A673 (cell line): ENCODE measurements at regions of chr16 and their contacts with region 1.

Region 1: GRCh38 chr16:62088731-62089410 is 52.6 kb upstream of the CDH8 start:
- DNase-seq: peak; percentile 94
- H3K4me3 ChIP-seq: no peak overlapping the region
- H3K27ac ChIP-seq: peak overlapping the region; percentile 89
- H3K4me1 ChIP-seq: peaks cover 47% of the 10 kb centered on the region
- H3K27me3 ChIP-seq: no peaks in the 10 kb centered on the region
- CTCF ChIP-seq: no peak

Region 2: DNA sequence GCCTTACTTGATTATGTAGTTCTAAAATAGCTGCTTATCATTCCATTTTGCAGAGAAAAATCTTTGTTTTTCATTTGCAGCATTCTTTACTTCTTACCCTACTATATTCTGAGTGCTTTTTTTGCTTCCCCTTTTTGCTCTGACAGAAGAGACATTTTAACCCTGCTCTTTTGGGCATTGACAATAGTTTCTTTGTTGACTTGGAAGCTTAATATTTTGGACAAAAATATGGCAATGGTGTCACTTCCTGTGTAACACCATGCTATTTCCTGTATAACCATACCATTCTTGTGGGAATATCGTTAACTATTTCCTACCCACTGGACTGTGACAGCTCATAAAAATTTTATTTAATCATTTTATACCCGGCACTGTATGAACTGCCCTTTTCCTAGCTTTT is 799.7 kb before region 1 on chr16:
- CTCF ChIA-PET with region 1: no interaction called
- POLR2A ChIA-PET with region 1: no interaction called
- intact Hi-C with region 1: loop called (anchors 2 kb)
- DNase-seq: peak; percentile 90
- H3K4me3 ChIP-seq: no peak overlapping the region
- H3K27ac ChIP-seq: peak overlapping the region; percentile 75
- H3K4me1 ChIP-seq: peaks cover 42% of the 10 kb centered on the region
- H3K27me3 ChIP-seq: no peaks in the 10 kb centered on the region
- CTCF ChIP-seq: no peak

Region 3: DNA sequence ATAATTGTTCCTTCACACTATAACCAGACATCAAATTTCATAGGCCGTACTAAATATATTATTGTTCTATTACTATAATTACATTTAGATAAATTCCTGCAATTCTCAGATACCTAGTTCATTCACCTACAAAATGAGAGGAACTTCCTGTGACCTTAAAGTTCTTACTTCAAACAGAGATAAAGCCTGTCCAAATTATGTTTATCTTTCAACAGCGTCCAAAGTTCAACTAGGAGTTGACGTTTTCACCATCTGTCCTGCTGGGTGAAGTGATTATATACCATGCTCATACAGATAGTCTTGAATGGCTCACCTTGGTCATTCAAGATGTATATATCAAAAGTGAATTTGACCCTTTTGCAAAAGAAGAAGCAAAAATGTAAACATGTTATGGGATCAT is 493.3 kb before region 1 on chr16:
- CTCF ChIA-PET with region 1: no interaction called
- POLR2A ChIA-PET with region 1: interaction called, 32 read pairs
- intact Hi-C with region 1: no loop called
- DNase-seq: no peak
- H3K4me3 ChIP-seq: no peak overlapping the region
- H3K27ac ChIP-seq: no peak overlapping the region
- H3K4me1 ChIP-seq: no peaks in the 10 kb centered on the region
- H3K27me3 ChIP-seq: no peaks in the 10 kb centered on the region
- CTCF ChIP-seq: no peak

Region 4: DNA sequence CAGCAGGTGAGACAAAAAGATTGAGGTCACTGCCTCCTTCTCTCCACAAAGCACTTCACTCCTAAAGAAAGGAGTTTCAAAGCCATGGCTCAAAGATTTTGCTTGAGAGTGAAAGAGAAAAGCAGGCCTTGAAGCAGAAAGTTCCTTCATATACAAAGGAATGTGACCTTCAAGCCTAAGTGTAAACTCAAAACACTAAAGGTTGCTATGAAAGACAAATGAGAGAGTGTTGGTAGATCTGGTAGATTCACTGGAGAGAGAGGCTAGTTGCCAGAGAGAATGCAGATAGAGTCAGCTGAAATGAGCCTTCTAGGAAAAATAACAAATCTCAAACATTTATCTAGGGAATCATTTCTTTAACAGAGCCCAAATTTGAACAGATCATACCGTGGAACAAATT is 357.9 kb before region 1 on chr16:
- CTCF ChIA-PET with region 1: interaction called, 12 read pairs
- POLR2A ChIA-PET with region 1: no interaction called
- intact Hi-C with region 1: no loop called
- DNase-seq: no peak
- H3K4me3 ChIP-seq: no peak overlapping the region
- H3K27ac ChIP-seq: no peak overlapping the region
- H3K4me1 ChIP-seq: no peaks in the 10 kb centered on the region
- H3K27me3 ChIP-seq: no peaks in the 10 kb centered on the region
- CTCF ChIP-seq: no peak

Region 5: DNA sequence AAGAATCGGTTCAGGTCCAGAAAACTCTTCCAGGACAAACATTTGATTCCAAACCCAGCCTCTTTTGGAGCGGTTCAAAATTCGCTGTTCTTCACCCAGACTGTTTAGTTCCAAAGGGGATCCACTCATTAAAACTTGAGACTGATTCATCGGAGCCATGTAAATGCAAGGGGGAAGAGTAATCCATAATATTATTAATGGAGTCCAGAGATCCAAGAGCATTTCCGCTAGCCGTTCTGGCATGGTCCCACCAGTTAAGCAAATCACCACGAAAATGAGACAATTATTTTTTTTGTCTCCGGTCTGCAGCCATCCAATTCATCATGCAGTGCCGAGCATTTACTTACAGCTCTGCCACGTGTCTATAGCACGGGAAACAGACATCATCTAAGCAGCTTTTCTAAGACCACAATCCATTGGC is 67.7 kb before region 1 on chr16:
- CTCF ChIA-PET with region 1: no interaction called
- POLR2A ChIA-PET with region 1: no interaction called
- intact Hi-C with region 1: no loop called
- DNase-seq: no peak
- H3K4me3 ChIP-seq: no peak overlapping the region
- H3K27ac ChIP-seq: no peak overlapping the region
- H3K4me1 ChIP-seq: peaks cover 8% of the 10 kb centered on the region
- H3K27me3 ChIP-seq: no peaks in the 10 kb centered on the region
- CTCF ChIP-seq: no peak